PC-9 (cell line): ENCODE measurements at regions of chr10 and their contacts with region 1.

Region 1: DNA sequence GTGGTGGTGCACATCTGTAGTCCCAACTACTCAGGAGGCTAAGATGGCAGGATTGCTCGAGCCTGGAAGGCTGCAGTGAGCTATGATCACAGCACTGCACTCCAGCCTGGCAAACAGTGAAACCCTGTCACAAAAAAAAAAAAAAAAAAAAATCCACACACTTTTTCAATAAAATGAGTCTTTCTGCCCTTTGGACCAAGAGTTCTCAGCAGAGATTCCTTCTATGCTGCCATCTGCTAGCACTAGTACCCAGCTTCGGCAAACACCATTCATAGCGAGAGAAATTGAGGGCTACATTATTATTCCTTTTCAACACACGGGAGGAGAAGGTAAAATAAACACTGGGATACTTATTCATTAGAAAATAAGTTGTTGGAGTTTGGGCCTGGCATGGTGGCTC is 43.4 kb upstream of the CCDC7 start:
- DNase-seq: no peak
- H3K4me3 ChIP-seq: no peak overlapping the region
- H3K27ac ChIP-seq: no peak overlapping the region
- H3K4me1 ChIP-seq: no peaks in the 10 kb centered on the region
- H3K27me3 ChIP-seq: no peaks in the 10 kb centered on the region
- CTCF ChIP-seq: no peak

Region 2: GRCh38 chr10:31549896-31550295 is 852.6 kb before region 1 on chr10:
- CTCF ChIA-PET with region 1: no interaction called
- POLR2A ChIA-PET with region 1: interaction called, 12 read pairs
- intact Hi-C with region 1: no loop called
- DNase-seq: no peak
- H3K4me3 ChIP-seq: no peak overlapping the region
- H3K27ac ChIP-seq: no peak overlapping the region
- H3K4me1 ChIP-seq: no peaks in the 10 kb centered on the region
- H3K27me3 ChIP-seq: no peaks in the 10 kb centered on the region
- CTCF ChIP-seq: no peak

Region 3: DNA sequence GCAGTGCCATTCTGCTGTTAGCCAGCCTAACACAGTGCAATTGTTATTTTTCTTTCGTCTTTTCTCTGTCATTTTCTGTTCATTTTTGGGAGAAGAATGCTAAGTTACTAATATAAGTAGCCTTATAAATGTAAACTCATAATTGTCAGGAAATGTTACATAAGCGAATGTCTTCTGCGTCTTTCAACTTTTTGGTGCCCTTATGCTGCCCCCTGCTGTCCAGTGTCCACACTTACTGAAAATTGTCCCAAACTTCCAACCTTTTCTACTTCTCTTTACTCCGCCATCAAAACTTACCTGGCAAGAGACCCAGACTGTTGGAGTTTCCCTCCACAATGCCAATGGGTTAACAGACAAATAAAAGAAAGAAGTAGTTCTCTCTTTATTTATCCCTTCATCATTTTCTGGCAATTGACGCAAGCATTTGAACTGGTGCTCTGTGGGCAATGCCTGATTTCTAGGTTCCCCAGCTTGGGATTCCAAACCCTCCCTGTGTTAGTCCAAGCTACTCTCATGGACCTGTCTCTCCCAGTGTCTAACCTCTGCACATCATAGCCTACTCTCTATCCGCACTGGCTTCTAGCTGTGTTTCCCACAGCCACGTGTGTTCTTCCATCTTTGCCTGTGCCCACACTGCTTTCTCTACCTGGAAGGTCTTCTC is 34.6 kb before region 1 on chr10:
- CTCF ChIA-PET with region 1: no interaction called
- POLR2A ChIA-PET with region 1: no interaction called
- intact Hi-C with region 1: no loop called
- DNase-seq: peak; percentile 56 to 59
- H3K4me3 ChIP-seq: no peak overlapping the region
- H3K27ac ChIP-seq: no peak overlapping the region
- H3K4me1 ChIP-seq: no peaks in the 10 kb centered on the region
- H3K27me3 ChIP-seq: no peaks in the 10 kb centered on the region
- CTCF ChIP-seq: peak; percentile 80